Left lung (tissue), 14 donors: ENCODE measurements at regions of chr3 and their contacts with region 1.

Region 1: GRCh38 chr3:15427182-15427880 is at the starts of genes EAF1 and METTL6:
- DNase-seq: peak; percentile 75 to 94 (median 86)
- ATAC-seq: peak; percentile 96
- H3K4me3 ChIP-seq: peak within 1 kb of the TSS; percentile 81 to 94
- H3K27ac ChIP-seq: peak within 1 kb of the TSS; percentile 37 to 88
- H3K4me1 ChIP-seq: peaks cover 7 to 57% of the 10 kb centered on the region in 2 donors
- H3K27me3 ChIP-seq: no peaks in the 10 kb centered on the region
- CTCF ChIP-seq: peak in 1 of 2 donors; percentile 14
- polyA plus RNA-seq, gene EAF1: 17.4 to 21.0 (median 18.7) TPM
- polyA plus RNA-seq, gene METTL6: 30.2 to 37.3 (median 32.5) TPM

Region 2: GRCh38 chr3:15557511-15557946 is 130.2 kb after region 1 on chr3:
- intact Hi-C with region 1: loop called in 1 of 2 experiments (anchors 10 kb)
- DNase-seq: peak in 2 of 4 donors; percentile 32 to 57
- ATAC-seq: peak; percentile 95
- H3K4me3 ChIP-seq: no peak overlapping the region
- H3K27ac ChIP-seq: peak overlapping the region in 1 of 2 donors; percentile 67
- H3K4me1 ChIP-seq: peaks cover 6 to 18% of the 10 kb centered on the region in 2 donors
- H3K27me3 ChIP-seq: no peaks in the 10 kb centered on the region
- CTCF ChIP-seq: peak; percentile 57 to 64